PC-9 (cell line): ENCODE measurements at regions of chr12 and their contacts with region 1.

Region 1: GRCh38 chr12:100279607-100280244 is 12.7 kb downstream of the SCYL2 start:
- DNase-seq: no peak
- H3K4me3 ChIP-seq: no peak overlapping the region
- H3K27ac ChIP-seq: no peak overlapping the region; the same call in 1 of the 2 replicates
- H3K4me1 ChIP-seq: 0 out of 2 replicates have a peak, but pooled peaks cover 5% of the 10 kb centered on the region
- H3K27me3 ChIP-seq: no peaks in the 10 kb centered on the region
- CTCF ChIP-seq: no peak

Region 2: GRCh38 chr12:100266835-100267618 is 12.7 kb before region 1 on chr12 and contains the starts of genes DEPDC4 and SCYL2:
- CTCF ChIA-PET with region 1: interaction called, 10 read pairs
- POLR2A ChIA-PET with region 1: no interaction called
- intact Hi-C with region 1: no loop called
- DNase-seq: peak; percentile 89 to 92
- H3K4me3 ChIP-seq: peak within 1 kb of the TSS; percentile 76
- H3K27ac ChIP-seq: peak within 1 kb of the TSS; percentile 87
- H3K4me1 ChIP-seq: peaks cover 21% of the 10 kb centered on the region
- H3K27me3 ChIP-seq: no peaks in the 10 kb centered on the region
- CTCF ChIP-seq: no peak
- total RNA-seq, gene DEPDC4: 1.8 and 2.9 TPM in 2 replicates
- total RNA-seq, gene SCYL2: 31.0 and 41.1 TPM in 2 replicates